Right lobe of liver (tissue), 6 donors: ENCODE measurements at regions of chr4 and their contacts with region 1.

Region 1: DNA sequence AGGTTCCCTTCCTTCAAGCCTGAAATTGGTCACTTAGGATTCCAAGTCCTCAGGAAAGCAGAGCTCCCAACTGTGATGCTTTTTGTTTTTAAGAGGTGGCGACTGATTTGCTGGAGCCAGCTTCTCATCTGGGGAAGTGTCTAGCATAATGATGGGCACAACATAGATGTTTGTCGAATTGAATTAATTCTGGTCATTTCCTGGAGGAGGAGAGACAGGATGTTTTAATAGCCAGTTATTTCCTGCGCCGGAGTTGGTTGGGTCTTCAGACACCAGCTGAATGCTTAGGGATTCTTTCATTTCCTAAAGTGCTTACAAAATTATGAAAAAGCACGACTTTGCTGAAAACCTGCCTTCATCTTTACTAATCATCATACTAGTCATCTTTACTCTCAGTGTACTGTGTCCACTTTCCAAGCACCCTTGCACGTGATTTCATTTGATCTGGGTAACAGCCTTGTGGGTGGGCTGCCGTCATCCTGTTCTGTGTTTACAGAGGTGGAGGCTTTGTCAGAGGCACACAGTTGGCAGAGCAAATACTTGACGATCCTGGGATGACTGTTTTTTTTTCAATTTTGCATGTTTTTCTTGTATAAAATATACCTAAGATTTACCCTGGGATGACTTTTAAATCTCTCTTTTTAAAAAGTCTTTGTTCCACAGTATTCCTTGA is 49.5 kb downstream of the RGS12 start:
- DNase-seq: no peak
- ATAC-seq: no peak
- H3K4me3 ChIP-seq: no peak overlapping the region
- H3K27ac ChIP-seq: no peak overlapping the region
- H3K4me1 ChIP-seq: peaks cover 0 to 12% (median 0%) of the 10 kb centered on the region in 4 donors
- H3K27me3 ChIP-seq: no peaks in the 10 kb centered on the region
- CTCF ChIP-seq: no peak
- POLR2A ChIP-seq: no peak

Region 2: GRCh38 chr4:3442959-3443749 is 100.8 kb after region 1 on chr4:
- intact Hi-C with region 1: loop called (anchors 5 kb)
- DNase-seq: peak; percentile 58 to 76 (median 69)
- ATAC-seq: peak; percentile 72 to 80 (median 76)
- H3K4me3 ChIP-seq: peak overlapping the region; percentile 38 to 57 (median 51)
- H3K27ac ChIP-seq: peak overlapping the region; percentile 78 to 90 (median 88)
- H3K4me1 ChIP-seq: peaks cover 0 to 16% (median 3%) of the 10 kb centered on the region in 4 donors
- H3K27me3 ChIP-seq: no peaks in the 10 kb centered on the region
- CTCF ChIP-seq: peak; percentile 99 to 100 (median 99)
- POLR2A ChIP-seq: no peak

Region 3: GRCh38 chr4:3449574-3450534 is 107.5 kb after region 1 on chr4:
- intact Hi-C with region 1: loop called in 1 of 2 experiments (anchors 5 kb)
- DNase-seq: peak in 1 of 3 donors; percentile 17
- ATAC-seq: peak in 1 of 4 donors; percentile 6
- H3K4me3 ChIP-seq: no peak overlapping the region
- H3K27ac ChIP-seq: no peak overlapping the region
- H3K4me1 ChIP-seq: peaks cover 0 to 10% (median 0%) of the 10 kb centered on the region in 4 donors
- H3K27me3 ChIP-seq: no peaks in the 10 kb centered on the region
- CTCF ChIP-seq: no peak
- POLR2A ChIP-seq: no peak